ENCODE measurements at regions of chr4 and their contacts with region 1.

Region 1: GRCh38 chr4:82918091-82918490 is 17.6 kb downstream of the THAP9 start:
- DNase-seq: no peak
- ATAC-seq: no peak
- H3K4me3 ChIP-seq: no peak overlapping the region
- H3K27ac ChIP-seq: no peak overlapping the region
- H3K4me1 ChIP-seq: no peaks in the 10 kb centered on the region
- H3K27me3 ChIP-seq: no peaks in the 10 kb centered on the region
- CTCF ChIP-seq: no peak

Region 2: DNA sequence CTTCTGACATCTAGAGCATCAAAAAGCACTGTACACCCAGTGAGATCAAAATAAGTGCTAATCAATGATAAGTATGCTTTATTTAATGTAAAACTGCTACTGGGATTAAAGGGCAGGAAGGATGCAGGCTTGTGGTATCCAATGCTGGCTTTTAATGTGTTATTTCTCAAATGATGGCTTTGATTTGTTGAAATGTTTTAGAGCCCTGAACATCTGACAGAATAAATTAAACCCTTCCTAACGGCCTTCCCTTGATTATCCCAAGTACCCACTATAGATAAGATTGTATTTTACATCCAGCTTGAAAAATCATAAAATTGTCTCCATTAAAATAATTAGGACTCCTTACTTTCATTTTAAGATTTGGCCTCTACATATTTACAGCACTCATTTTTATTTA is 927.2 kb before region 1 on chr4:
- CTCF ChIA-PET with region 1: no interaction called
- POLR2A ChIA-PET with region 1: no interaction called
- in situ Hi-C with region 1: no loop called
- intact Hi-C with region 1: no loop called
- DNase-seq: no peak
- ATAC-seq: no peak
- H3K4me3 ChIP-seq: no peak overlapping the region
- H3K27ac ChIP-seq: no peak overlapping the region
- H3K4me1 ChIP-seq: no peaks in the 10 kb centered on the region
- H3K27me3 ChIP-seq: no peaks in the 10 kb centered on the region
- CTCF ChIP-seq: no peak

Region 3: DNA sequence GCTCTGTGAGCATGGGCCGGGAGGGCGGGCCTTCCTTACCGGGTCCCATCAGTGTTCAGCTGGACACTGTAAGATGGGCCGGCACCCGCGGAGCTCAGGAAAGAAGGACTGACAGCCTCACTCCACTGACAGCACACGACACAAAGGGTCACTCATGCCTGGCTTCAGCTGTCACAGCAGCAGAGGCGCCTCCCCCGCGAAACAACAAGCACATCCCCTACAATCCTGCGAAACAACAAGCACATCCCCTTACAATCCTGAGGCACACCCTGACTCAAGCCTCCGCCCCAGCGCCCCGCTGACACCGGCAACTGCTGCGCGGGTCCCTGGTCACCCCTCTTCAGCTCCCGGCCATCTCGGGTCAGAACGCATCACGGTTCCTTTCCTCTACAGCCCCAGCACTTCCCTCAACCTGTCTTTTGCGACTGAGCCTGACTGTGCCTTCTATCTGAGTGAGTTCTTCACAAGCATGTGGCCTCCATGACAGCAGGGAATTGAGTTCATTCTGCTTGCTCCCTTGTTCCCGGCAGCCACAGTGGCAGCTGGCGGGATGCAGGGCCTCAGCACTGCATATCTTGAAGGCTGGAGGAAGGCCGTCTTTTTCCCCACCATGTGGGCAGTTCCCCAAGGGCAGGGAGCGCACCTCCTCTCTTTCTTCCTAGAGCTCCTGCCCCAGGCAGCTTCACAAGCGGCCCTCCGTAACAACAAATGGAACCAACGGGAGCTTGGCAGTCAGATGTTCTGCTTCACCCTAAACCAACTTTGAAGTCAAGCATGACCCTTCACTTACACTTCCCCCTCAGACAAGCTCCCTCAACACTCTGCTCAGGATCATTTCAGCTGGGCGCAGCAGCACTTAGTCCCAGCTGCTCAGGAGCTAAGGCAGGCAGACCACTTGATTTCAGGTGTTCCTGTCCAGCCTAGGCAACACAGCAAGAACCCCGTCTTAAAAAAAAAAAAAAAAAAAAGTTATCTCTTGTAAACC is 159.1 kb before region 1 on chr4:
- CTCF ChIA-PET with region 1: no interaction called
- POLR2A ChIA-PET with region 1: interaction called, 11 read pairs
- in situ Hi-C with region 1: no loop called
- intact Hi-C with region 1: no loop called
- DNase-seq: no peak
- ATAC-seq: no peak
- H3K4me3 ChIP-seq: no peak overlapping the region
- H3K27ac ChIP-seq: no peak overlapping the region
- H3K4me1 ChIP-seq: no peaks in the 10 kb centered on the region
- H3K27me3 ChIP-seq: no peaks in the 10 kb centered on the region
- CTCF ChIP-seq: no peak

Measured in Panc1 (cell line).